Dendritic cell treated with granulocyte-macrophage colony-stimulating factor and Interleukin-4, amounts not matched to agents 40 ng/mL and 50 ng/mL, for 4 days (primary cell): ENCODE measurements at regions of chr3 and their contacts with region 1.

Region 1: DNA sequence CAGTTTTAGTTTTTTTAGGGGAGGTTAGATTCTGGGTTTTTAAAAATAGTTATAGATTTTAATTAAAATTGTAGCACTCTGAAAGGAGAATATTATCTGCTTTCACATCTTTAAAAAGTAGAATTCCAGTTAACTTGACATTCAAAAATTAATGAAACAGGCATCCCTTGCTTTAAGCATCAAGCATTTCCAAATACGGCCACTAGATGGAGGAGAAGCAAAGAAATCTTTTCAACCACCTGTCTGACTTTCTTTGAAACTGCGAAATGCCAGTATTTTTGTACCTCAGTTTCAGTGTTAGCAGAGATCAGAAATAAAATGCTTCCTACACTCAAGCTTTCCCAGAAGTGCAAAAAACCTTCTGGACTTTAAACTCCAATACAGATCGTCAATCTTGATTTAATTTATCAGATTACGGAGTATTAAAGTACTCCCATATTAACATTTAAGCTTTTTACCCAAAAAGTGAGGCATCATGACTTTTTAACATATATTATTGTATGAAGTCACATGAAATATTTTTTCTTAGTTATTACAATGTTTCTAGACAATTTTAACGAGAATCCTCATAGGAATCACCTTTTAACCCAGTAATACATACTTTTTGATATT is 153.3 kb downstream of the P3H2 start:
- H3K4me3 Mint-ChIP-seq: no peak overlapping the region
- H3K27ac Mint-ChIP-seq: no peak overlapping the region
- H3K4me1 Mint-ChIP-seq: no peaks in the 10 kb centered on the region
- H3K27me3 Mint-ChIP-seq: peaks cover 2% of the 10 kb centered on the region

Region 2: DNA sequence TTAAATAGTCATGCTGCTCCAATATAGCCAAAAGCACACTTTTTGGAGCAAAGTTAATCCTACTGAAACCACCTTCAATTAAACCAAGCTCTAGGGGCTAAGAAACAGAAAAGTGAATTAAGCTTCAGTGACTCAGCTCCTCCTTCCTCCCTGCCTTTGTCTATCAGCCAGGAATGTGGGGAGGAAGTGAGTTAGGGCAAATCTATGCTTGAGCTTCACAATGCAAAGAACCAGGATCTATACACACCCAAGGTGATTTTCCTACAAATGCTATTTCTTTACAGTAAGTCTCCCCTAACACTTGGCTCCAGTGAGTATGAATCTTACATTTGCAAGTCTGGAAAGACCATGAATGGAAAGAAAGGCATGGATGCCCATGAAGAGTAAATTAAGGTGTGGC is 58.7 kb before region 1 on chr3:
- intact Hi-C with region 1: no loop called
- H3K4me3 Mint-ChIP-seq: no peak overlapping the region
- H3K27ac Mint-ChIP-seq: no peak overlapping the region
- H3K4me1 Mint-ChIP-seq: no peaks in the 10 kb centered on the region
- H3K27me3 Mint-ChIP-seq: no peaks in the 10 kb centered on the region

Region 3: DNA sequence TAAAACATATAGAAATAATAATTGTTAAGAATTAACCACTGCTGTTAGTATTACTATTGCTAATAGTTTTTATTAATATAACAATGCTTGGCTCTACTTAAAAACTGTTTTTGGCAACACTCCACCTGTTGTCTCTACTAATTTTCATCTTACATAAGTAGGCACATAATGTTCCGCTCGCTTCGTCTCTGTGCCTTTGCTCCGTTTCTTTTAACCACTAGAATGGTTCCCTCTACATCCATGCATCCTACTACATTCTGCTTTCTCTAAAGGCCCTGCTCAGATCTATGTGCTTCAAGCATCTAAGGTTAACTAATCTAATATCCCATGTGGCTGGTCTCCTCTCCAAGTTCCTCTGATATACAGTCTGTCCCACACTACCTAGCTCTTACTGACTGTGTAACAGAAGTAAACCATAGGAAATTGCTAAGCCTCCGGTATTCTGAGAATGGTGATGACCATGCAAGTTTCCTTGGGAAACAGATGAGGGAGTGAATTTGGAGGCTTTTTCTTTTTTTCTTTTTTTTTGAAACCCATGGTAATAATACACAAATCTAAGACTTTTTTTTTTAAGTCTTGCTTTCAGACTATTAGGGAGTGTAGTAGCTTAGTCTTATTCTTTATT is 15.1 kb after region 1 on chr3:
- intact Hi-C with region 1: no loop called
- H3K4me3 Mint-ChIP-seq: no peak overlapping the region
- H3K27ac Mint-ChIP-seq: no peak overlapping the region
- H3K4me1 Mint-ChIP-seq: no peaks in the 10 kb centered on the region
- H3K27me3 Mint-ChIP-seq: no peaks in the 10 kb centered on the region

Region 4: GRCh38 chr3:190003681-190004123 is 36.3 kb after region 1 on chr3:
- intact Hi-C with region 1: no loop called
- H3K4me3 Mint-ChIP-seq: no peak overlapping the region
- H3K27ac Mint-ChIP-seq: no peak overlapping the region
- H3K4me1 Mint-ChIP-seq: no peaks in the 10 kb centered on the region
- H3K27me3 Mint-ChIP-seq: no peaks in the 10 kb centered on the region

Region 5: GRCh38 chr3:190017521-190018288 is 50.3 kb after region 1 on chr3:
- intact Hi-C with region 1: no loop called
- H3K4me3 Mint-ChIP-seq: no peak overlapping the region
- H3K27ac Mint-ChIP-seq: no peak overlapping the region
- H3K4me1 Mint-ChIP-seq: no peaks in the 10 kb centered on the region
- H3K27me3 Mint-ChIP-seq: no peaks in the 10 kb centered on the region

Region 6: GRCh38 chr3:190205739-190206138 is 238.4 kb after region 1 on chr3:
- intact Hi-C with region 1: loop called (anchors 1 kb)
- H3K4me3 Mint-ChIP-seq: no peak overlapping the region
- H3K27ac Mint-ChIP-seq: no peak overlapping the region
- H3K4me1 Mint-ChIP-seq: peaks cover 24% of the 10 kb centered on the region
- H3K27me3 Mint-ChIP-seq: peaks cover 11% of the 10 kb centered on the region

Region 7: DNA sequence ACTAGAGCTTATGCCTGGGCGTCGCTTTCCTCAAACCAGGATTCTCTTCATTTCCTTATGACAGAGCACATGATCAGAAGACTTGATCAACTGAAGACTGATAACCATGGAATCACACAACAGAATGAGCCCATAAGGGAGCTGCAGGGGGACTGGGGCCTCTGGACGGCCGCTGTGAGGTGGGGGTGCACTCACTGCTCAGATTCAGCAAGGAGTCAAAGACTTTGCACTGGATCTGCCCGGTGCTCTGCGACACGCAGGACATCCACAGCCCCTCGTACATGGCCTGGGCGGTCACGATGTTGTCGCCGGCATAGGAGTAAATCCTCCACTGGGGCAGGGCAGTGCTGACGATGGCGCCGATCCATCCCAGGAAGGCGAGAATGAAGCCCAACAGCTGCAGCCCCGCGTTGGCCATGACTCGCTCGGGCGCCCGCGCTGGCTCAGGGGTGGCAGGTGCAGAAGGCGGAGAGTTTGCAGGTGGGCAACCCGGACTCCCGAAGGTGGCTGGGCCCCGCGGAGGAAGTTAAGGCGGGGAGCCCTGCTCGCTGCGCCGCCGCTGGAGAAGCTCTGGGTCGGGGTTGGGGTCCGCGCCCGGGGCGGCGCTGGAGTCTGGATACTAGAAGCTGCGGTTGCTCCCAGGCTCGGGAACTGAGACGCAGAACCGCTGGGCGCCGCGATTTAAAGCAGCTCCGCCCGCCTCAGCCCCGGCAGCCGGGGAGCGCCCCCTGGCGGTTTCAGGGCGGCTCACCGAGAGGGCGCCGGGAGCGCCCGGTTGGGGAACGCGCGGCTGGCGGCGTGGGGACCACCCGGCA is 354.6 kb after region 1 on chr3 and contains the start of gene CLDN1:
- intact Hi-C with region 1: loop called (anchors 5 kb)
- H3K4me3 Mint-ChIP-seq: peak within 1 kb of the TSS; percentile 72
- H3K27ac Mint-ChIP-seq: peak within 1 kb of the TSS; percentile 79
- H3K4me1 Mint-ChIP-seq: peaks cover 24% of the 10 kb centered on the region
- H3K27me3 Mint-ChIP-seq: peaks cover 59% of the 10 kb centered on the region

Region 8: DNA sequence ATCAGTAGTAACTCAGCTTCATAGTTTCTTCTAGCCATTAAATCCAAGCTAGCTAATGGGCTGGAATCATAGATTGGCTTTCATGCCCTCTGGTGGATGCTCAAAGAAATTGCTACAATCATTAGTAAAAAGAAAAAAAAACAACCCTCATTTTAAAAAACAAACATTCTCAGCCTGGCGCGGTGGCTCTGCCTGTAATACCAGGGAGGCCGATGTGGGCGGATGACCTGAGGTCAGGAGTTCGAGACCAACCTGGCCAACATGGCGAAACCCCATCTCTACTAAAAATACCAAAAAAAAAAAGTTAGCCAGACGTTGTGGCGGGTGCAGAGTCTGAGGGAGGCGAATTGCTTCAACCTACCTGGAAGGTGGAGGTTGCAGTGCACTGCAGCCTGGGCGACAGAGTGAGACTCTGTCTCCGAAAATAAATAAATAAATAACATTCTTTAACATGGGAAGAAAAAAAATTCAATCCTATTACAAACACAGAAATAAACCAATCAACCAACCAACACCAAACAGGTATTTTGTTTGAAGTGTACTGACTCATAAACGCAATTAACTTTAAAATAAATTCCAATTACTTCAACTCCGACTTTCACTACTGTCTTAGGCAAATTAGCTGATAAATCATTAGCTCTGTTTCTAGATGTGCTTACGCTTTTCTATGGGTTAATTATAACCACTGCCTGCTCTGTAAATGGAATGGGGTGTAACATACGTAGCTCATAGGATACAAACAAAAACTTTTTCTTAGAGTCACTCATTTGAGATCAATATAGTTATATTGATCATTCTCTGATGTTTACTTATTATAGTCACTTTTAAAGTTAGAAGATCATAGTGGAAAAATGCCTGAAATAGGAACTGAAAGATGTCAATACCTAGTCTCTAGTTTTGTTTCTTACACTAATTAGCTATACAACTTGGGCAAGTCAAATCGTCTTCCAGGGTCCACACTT is 457.4 kb after region 1 on chr3:
- intact Hi-C with region 1: loop called (anchors 2 kb)
- H3K4me3 Mint-ChIP-seq: peak overlapping the region; percentile 34
- H3K27ac Mint-ChIP-seq: no peak overlapping the region
- H3K4me1 Mint-ChIP-seq: no peaks in the 10 kb centered on the region
- H3K27me3 Mint-ChIP-seq: peaks cover 2% of the 10 kb centered on the region